Kidney (tissue), 22 donors: ENCODE measurements at regions of chr1 and their contacts with region 1.

Region 1: DNA sequence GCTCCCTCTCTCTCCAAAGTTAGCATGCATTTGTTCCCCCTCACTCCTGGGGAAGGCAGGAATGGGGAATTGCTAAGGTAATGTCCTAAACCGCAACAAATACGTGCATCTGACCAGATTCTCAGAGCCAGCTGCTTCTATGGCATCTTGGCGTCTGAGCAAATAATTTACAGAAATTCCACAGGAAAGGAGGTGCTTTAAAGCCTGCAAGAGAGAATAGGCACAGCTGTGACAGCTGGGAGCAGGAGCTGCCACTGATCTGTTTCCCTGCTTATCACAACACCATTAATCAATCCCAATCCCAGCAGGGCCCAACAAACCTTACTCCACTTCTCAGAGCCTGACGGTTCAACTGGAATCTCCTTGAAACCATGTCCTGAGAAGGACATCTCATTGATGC is 83.5 kb upstream of the ZNF281 start:
- DNase-seq: peak in 4 of 5 donors; percentile 54 to 86 (median 80)
- H3K4me3 ChIP-seq: no peak overlapping the region
- H3K27ac ChIP-seq: no peak overlapping the region
- H3K4me1 ChIP-seq: peaks cover 0 to 3% (median 0%) of the 10 kb centered on the region in 3 donors
- H3K27me3 ChIP-seq: no peaks in the 10 kb centered on the region
- CTCF ChIP-seq: no peak

Region 2: GRCh38 chr1:199684686-199685273 is 808.6 kb before region 1 on chr1:
- intact Hi-C with region 1: loop called (anchors 10 kb)
- DNase-seq: peak in 3 of 5 donors; percentile 24 to 74 (median 69)
- H3K4me3 ChIP-seq: no peak overlapping the region
- H3K27ac ChIP-seq: no peak overlapping the region
- H3K4me1 ChIP-seq: no peaks in the 10 kb centered on the region
- H3K27me3 ChIP-seq: no peaks in the 10 kb centered on the region
- CTCF ChIP-seq: peak; percentile 76

Region 3: GRCh38 chr1:200242110-200243041 is 251.0 kb before region 1 on chr1:
- intact Hi-C with region 1: no loop called
- DNase-seq: peak in 4 of 5 donors; percentile 45 to 83 (median 66)
- H3K4me3 ChIP-seq: peak overlapping the region in 2 of 3 donors; percentile 8 to 30
- H3K27ac ChIP-seq: peak overlapping the region; percentile 25 to 26
- H3K4me1 ChIP-seq: no peaks in the 10 kb centered on the region
- H3K27me3 ChIP-seq: peaks cover 7% of the 10 kb centered on the region
- CTCF ChIP-seq: no peak